ENCODE measurements at regions of chr16 and their contacts with region 1.

Region 1: DNA sequence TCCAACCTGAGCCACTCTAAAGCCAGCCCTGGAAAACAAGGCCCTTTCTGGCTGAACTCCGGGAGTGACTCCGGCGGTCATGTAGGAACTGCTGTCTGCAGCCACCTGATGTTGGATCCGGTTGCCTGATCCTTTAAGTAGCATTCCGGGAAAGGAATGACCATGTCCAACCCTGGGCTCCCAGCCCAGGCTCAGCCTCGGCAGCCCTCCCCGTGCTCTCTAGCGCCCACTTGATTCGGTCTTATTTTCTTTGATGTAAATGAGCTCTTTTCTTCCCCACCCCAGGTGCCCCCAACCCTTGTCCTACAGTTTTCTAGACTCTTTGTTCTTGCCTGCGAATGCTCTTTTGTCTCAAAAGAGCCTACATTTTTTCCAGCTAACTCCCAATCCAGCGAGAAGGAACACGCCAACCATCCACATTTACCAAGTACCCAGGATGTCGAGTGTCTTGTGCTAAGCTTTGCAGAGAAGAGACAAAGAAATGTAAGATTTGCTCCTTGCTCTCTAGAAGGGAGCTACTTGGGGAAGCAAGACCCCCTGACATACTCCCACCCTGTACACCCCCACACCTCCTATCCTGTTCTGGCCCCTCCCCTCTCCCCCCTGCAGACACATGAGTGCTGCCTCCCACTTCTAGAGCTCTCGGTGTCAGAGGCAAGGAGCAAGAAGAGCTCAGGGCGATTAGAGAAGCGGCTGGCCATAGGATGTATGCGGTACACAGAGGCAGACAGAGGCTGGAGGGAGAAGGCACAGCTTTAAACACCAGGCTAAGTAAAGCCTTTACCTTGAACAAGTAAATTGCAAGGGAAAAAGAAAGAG is 53.8 kb downstream of the COG7 start:
- DNase-seq: peak; percentile 68
- ATAC-seq: peak; percentile 90

Region 2: DNA sequence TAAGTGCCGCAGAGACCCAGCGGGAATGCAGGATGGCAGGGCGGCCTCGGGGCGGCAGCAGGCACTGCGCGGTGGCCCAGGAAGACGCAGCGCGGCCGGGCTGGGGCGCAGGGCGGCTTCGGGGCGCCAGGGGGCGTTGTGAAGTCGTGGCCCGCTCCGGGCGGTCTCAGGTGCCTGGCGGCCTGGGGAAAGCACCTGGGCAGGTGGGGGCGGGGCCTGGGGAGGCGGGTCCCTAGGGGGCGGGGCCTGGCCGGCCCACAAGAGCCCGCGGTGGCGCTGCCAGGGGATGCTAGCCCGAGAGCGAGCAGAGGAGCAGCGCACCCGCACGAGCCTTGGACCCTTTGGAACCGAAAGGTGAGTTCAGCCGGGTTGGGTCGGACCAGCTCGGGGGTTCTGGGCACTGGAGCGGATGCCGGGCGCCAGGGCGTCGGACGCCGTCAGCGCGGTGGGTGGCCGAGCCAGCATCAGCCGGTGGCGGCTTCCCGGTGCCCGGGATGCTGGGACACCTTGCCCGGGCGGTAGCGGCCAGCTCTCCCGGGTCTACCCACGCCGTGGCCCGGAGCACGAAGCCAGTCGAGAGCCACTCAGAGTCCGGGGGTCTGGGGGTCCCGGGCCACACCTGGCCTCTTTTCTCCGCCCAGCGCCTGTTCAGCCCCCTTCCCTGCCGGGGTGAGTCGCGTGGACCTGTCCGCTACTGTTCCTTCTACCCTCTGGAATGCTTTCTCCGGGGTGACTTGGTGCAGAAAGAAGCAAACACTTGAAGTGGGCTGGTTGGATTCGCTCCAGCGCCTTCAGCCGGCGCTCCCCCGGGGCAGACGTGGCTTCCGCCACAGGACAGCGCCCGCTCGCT is 216.5 kb before region 1 on chr16 and contains the start of gene SCNN1G:
- intact Hi-C with region 1: loop called (anchors 10 kb)
- DNase-seq: peak; percentile 78
- ATAC-seq: peak; percentile 97
- total RNA-seq, gene SCNN1G: 0.13 TPM

Region 3: DNA sequence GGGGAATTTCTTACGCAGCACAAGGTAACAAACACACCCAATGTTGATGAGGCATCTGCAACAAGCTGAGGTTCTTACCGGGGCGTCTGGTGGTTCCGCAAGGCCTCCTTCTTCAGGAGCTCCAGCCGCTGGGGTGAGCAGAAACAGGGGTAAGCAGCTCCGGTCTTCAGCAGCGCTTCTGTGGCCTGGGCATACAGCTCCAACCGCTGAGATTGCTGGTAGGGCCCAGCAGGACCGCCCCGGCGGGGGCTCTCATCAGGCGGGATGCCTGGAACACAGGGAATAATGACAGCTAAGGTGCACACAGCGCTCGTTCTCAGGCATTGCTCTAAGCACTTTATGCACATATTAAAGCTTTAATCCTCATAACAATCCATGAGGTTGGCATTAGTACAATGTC is 145.2 kb after region 1 on chr16:
- intact Hi-C with region 1: no loop called
- DNase-seq: no peak
- ATAC-seq: no peak